GM12878 (cell line): ENCODE measurements at regions of chr11 and their contacts with region 1.

Region 1: GRCh38 chr11:108237058-108237481 is 14.2 kb downstream of the ATM start:
- DNase-seq: no peak
- ATAC-seq: peak; percentile 74
- H3K4me3 ChIP-seq: no peak overlapping the region
- H3K27ac ChIP-seq: peak overlapping the region; percentile 84
- H3K4me1 ChIP-seq: peaks cover 20% of the 10 kb centered on the region
- H3K27me3 ChIP-seq: no peaks in the 10 kb centered on the region
- CTCF ChIP-seq: no peak
- EP300 ChIP-seq: no peak
- POLR2A ChIP-seq: no peak
- RAD21 ChIP-seq: no peak

Region 2: DNA sequence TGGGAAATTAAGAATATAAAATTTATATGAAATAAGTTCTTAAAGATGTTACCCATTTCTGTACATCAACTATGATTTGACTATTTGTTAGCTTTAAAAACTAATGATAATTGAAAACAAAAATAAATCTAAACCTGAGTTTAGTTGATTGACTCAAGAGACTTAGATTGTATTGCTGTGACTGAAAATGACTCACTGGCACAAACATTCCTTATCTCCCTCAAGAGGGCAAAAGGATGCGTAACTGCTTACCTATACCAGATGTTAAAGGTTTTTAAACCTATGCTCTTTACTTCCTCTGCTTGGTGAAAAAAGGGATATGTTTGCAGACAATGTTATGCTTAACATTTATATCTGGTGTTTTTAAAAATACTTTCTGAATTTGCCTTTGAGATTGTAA is 16.1 kb after region 1 on chr11:
- CTCF ChIA-PET with region 1: interaction called, 12 read pairs
- POLR2A ChIA-PET with region 1: interaction called, 4 read pairs
- RAD21 ChIA-PET with region 1: interaction called, 6 read pairs
- SMC1A ChIA-PET with region 1: interaction called, 5 read pairs
- in situ Hi-C with region 1: no loop called
- intact Hi-C with region 1: no loop called
- DNase-seq: no peak
- ATAC-seq: no peak
- H3K4me3 ChIP-seq: no peak overlapping the region
- H3K27ac ChIP-seq: no peak overlapping the region
- H3K4me1 ChIP-seq: no peaks in the 10 kb centered on the region
- H3K27me3 ChIP-seq: no peaks in the 10 kb centered on the region
- CTCF ChIP-seq: no peak
- EP300 ChIP-seq: no peak
- POLR2A ChIP-seq: no peak
- RAD21 ChIP-seq: no peak

Region 3: GRCh38 chr11:108393046-108393445 is 156.0 kb after region 1 on chr11:
- CTCF ChIA-PET with region 1: no interaction called
- POLR2A ChIA-PET with region 1: no interaction called
- RAD21 ChIA-PET with region 1: no interaction called
- SMC1A ChIA-PET with region 1: no interaction called
- in situ Hi-C with region 1: no loop called
- intact Hi-C with region 1: no loop called
- DNase-seq: no peak
- ATAC-seq: no peak
- H3K4me3 ChIP-seq: no peak overlapping the region
- H3K27ac ChIP-seq: no peak overlapping the region
- H3K4me1 ChIP-seq: no peaks in the 10 kb centered on the region
- H3K27me3 ChIP-seq: no peaks in the 10 kb centered on the region
- CTCF ChIP-seq: no peak
- EP300 ChIP-seq: no peak
- POLR2A ChIP-seq: no peak
- RAD21 ChIP-seq: no peak